Activated CD4-positive, alpha-beta T cell treated with anti-CD3 and anti-CD28 coated beads, Interleukin-2, amount 10 ng/mL, durations not matched to agents 24 days and 14 days (primary cell): ENCODE measurements at regions of chr2 and their contacts with region 1.

Region 1: DNA sequence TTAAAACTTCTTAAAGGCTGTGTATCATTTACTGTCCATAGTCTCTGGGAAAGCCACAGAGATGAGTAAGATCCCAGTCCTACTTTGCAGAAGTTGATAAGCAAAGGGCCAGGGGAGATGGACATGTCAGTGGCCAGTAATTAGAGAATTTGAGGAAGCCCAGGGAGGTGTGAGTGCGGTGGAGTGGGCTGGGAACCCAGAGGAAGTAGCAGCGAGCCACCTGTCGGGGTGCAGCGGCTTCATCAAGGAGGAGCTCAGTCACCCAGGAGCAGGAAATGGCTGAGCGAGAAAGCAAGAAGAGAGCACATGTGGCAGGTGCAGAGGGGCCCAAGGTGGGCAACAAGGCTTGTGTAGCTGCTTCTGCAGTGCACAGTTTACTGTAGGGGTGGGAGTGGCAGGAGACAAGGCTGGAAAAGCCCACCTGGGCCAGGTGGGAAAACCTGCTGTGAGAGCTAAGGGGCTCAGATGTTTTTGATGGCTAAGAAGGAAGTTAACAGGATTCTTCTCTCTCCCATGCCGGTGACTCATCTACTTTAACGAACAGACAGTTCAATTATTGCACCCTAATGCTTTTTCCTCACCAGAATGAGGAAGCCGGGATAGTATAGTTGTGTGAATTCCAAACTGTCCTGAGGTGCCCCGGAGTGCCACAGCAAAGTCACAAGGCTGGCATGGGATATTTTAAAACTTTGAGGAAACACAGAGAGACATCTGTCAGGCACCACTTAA is 34.8 kb upstream of the MGAT5 start:
- DNase-seq: peak; percentile 75
- H3K4me3 Mint-ChIP-seq: peak overlapping the region; percentile 27
- H3K27ac Mint-ChIP-seq: peak overlapping the region; percentile 66
- H3K4me1 Mint-ChIP-seq: peaks cover 36% of the 10 kb centered on the region
- H3K27me3 Mint-ChIP-seq: no peaks in the 10 kb centered on the region

Region 2: GRCh38 chr2:133844214-133844892 is 374.7 kb before region 1 on chr2:
- intact Hi-C with region 1: no loop called
- DNase-seq: peak; percentile 82
- H3K4me3 Mint-ChIP-seq: no peak overlapping the region
- H3K27ac Mint-ChIP-seq: no peak overlapping the region
- H3K4me1 Mint-ChIP-seq: no peaks in the 10 kb centered on the region
- H3K27me3 Mint-ChIP-seq: peaks cover 3% of the 10 kb centered on the region

Region 3: DNA sequence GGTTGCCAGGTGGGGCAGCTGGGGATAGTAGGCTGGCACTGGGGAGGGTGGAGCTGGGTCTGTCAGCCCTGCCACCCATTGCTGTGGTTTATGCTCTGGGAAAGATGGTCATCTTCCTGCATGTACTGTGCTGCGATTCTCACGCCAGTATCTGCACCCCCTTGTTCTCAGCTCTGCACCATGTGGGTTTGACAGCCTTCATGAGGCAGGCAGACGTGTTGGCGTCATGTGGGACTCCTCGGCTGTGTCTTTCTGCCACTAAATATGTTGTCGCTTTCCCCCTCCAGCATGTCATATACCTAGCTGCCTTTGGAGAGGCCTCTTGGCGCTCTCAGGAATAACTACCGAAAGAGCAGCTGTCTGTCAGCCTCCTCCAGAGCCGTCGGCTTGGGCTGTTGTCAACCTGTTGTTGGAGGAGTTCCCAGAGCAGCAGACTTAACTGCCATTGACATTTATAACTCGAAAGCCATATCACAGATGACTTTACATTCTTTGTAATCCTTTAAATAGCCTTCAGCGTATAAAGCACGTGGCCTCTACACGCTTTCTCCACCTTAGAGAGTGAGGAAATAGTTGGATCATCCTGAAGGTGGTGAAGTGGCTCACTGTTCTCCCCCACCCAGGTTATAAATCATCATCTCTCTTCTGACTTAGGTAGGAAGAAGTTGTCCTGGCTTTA is 45.6 kb before region 1 on chr2:
- intact Hi-C with region 1: loop called (anchors 1 kb)
- DNase-seq: no peak
- H3K4me3 Mint-ChIP-seq: no peak overlapping the region
- H3K27ac Mint-ChIP-seq: no peak overlapping the region
- H3K4me1 Mint-ChIP-seq: peaks cover 15% of the 10 kb centered on the region
- H3K27me3 Mint-ChIP-seq: no peaks in the 10 kb centered on the region

Region 4: GRCh38 chr2:134245340-134245984 is 26.4 kb after region 1 on chr2:
- intact Hi-C with region 1: loop called (anchors 1 kb)
- DNase-seq: peak; percentile 92
- H3K4me3 Mint-ChIP-seq: peak overlapping the region; percentile 56
- H3K27ac Mint-ChIP-seq: no peak overlapping the region
- H3K4me1 Mint-ChIP-seq: peaks cover 55% of the 10 kb centered on the region
- H3K27me3 Mint-ChIP-seq: peaks cover 2% of the 10 kb centered on the region

Region 5: DNA sequence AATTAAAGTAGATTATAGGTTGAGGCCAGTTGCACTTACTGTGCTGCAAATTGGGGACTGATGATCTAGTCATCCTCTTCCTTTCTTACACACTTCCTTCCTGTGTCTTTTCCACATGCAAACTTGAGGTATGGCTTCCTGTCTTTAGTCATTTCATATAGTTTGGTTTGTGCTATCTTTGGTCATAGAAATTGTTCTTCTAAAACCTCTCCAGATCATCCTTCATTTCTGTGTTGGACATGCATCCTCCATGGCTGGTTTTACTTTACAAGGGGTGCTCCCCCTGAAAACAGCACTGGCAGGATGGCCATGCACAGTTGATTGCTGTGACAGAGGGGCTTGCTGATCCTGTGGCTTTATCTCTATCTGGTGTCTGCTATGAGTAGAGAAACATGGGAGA is 71.3 kb after region 1 on chr2:
- intact Hi-C with region 1: loop called (anchors 1 kb)
- DNase-seq: peak; percentile 77
- H3K4me3 Mint-ChIP-seq: no peak overlapping the region
- H3K27ac Mint-ChIP-seq: no peak overlapping the region
- H3K4me1 Mint-ChIP-seq: peaks cover 30% of the 10 kb centered on the region
- H3K27me3 Mint-ChIP-seq: no peaks in the 10 kb centered on the region

Region 6: DNA sequence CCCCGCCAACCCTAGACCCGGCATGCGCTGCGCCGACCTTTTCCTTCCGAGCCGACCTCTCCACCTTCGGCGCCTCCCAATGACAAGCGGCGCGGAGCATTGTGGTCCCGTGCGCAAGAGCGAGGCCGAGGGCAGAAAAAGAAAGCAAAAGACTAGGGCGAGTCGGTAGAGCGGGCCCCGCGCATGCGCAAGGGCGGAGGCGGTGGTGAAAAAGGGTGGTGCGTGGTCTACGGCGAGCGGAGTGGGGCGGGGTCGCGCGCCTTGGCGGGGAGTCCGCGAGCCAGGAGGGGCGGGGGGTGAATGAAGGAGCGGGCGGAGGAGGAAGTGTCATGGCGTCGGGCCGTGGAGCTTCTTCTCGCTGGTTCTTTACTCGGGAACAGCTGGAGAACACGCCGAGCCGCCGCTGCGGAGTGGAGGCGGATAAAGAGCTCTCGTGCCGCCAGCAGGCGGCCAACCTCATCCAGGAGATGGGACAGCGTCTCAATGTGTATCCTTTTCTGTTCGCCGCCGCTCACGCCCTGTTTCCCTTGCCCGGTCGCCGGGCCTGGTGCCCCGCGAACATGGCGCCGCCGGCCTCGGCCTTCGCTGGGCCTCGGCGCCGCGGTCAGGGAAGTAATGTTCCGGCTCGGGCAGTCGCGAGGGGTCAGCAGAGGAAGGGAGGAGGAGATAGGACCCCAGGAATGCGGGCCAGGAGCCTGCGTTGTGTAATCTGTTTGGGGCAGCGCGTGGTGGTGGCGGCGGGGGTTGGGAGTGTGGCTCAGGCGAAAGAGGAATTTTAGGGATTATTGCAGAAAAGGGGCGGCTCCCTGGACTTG is 699.6 kb after region 1 on chr2 and contains the start of gene CCNT2:
- intact Hi-C with region 1: loop called (anchors 5 kb)
- DNase-seq: peak; percentile 100
- H3K4me3 Mint-ChIP-seq: peak within 1 kb of the TSS; percentile 96
- H3K27ac Mint-ChIP-seq: peak within 1 kb of the TSS; percentile 97
- H3K4me1 Mint-ChIP-seq: peaks cover 23% of the 10 kb centered on the region
- H3K27me3 Mint-ChIP-seq: peaks cover 6% of the 10 kb centered on the region
- total RNA-seq, gene CCNT2: 46.0 and 48.5 TPM in 2 replicates